WTC11 (cell line): ENCODE measurements at regions of chr17 and their contacts with region 1.

Region 1: GRCh38 chr17:57995076-57995956 is 7.3 kb upstream of the VEZF1 start:
- DNase-seq: peak; percentile 61
- ATAC-seq: peak; percentile 81
- H3K4me3 Mint-ChIP-seq: no peak overlapping the region
- H3K27ac Mint-ChIP-seq: peak overlapping the region; percentile 52
- H3K4me1 Mint-ChIP-seq: peaks cover 51% of the 10 kb centered on the region
- H3K27me3 Mint-ChIP-seq: no peaks in the 10 kb centered on the region
- CTCF ChIP-seq: peak; percentile 50; the same call in 1 of the 2 replicates

Region 2: GRCh38 chr17:57868007-57868909 is 127.1 kb before region 1 on chr17:
- CTCF ChIA-PET with region 1: interaction called, 207 read pairs
- POLR2A ChIA-PET with region 1: no interaction called
- DNase-seq: peak; percentile 76
- ATAC-seq: peak; percentile 89
- H3K4me3 Mint-ChIP-seq: no peak overlapping the region
- H3K27ac Mint-ChIP-seq: 0 out of 2 replicates have a peak overlapping the region, but pooled peaks have one; percentile 53
- H3K4me1 Mint-ChIP-seq: peaks cover 47% of the 10 kb centered on the region
- H3K27me3 Mint-ChIP-seq: peaks cover 5% of the 10 kb centered on the region
- CTCF ChIP-seq: peak; percentile 23

Region 3: GRCh38 chr17:57892146-57892828 is 103.0 kb before region 1 on chr17:
- CTCF ChIA-PET with region 1: interaction called, 15 read pairs
- POLR2A ChIA-PET with region 1: interaction called, 4 read pairs
- DNase-seq: peak; percentile 96
- ATAC-seq: peak; percentile 91
- H3K4me3 Mint-ChIP-seq: peak overlapping the region; percentile 10; the same call in 1 of the 2 replicates
- H3K27ac Mint-ChIP-seq: peak overlapping the region; percentile 95
- H3K4me1 Mint-ChIP-seq: peaks cover 18% of the 10 kb centered on the region
- H3K27me3 Mint-ChIP-seq: no peaks in the 10 kb centered on the region
- CTCF ChIP-seq: peak; percentile 91

Region 4: GRCh38 chr17:57946798-57947358 is 48.4 kb before region 1 on chr17:
- CTCF ChIA-PET with region 1: interaction called, 11 read pairs
- POLR2A ChIA-PET with region 1: no interaction called
- DNase-seq: no peak
- ATAC-seq: peak; percentile 57; the same call in 1 of the 2 replicates
- H3K4me3 Mint-ChIP-seq: no peak overlapping the region
- H3K27ac Mint-ChIP-seq: peak overlapping the region; percentile 43
- H3K4me1 Mint-ChIP-seq: peaks cover 45% of the 10 kb centered on the region
- H3K27me3 Mint-ChIP-seq: no peaks in the 10 kb centered on the region; the same call in 1 of the 2 replicates
- CTCF ChIP-seq: no peak

Region 5: GRCh38 chr17:58082870-58083490 is 87.7 kb after region 1 on chr17 and contains the start of gene DYNLL2:
- CTCF ChIA-PET with region 1: interaction called, 20 read pairs
- POLR2A ChIA-PET with region 1: interaction called, 5 read pairs
- DNase-seq: peak; percentile 97
- ATAC-seq: peak; percentile 90
- H3K4me3 Mint-ChIP-seq: peak within 1 kb of the TSS; percentile 86
- H3K27ac Mint-ChIP-seq: peak within 1 kb of the TSS; percentile 90
- H3K4me1 Mint-ChIP-seq: peaks cover 40% of the 10 kb centered on the region
- H3K27me3 Mint-ChIP-seq: peaks cover 6% of the 10 kb centered on the region
- CTCF ChIP-seq: no peak
- total RNA-seq, gene DYNLL2: 32.1 to 34.6 TPM (median 32.2 TPM) in 3 replicates